ENCODE measurements at regions of chr10 and their contacts with region 1.

Region 1: GRCh38 chr10:130631142-130632096 is 495.2 kb downstream of the GLRX3 start:
- DNase-seq: peak; percentile 67
- H3K4me3 ChIP-seq: no peak overlapping the region
- H3K27ac ChIP-seq: peak overlapping the region; percentile 33
- H3K4me1 ChIP-seq: peaks cover 20% of the 10 kb centered on the region
- H3K27me3 ChIP-seq: no peaks in the 10 kb centered on the region
- CTCF ChIP-seq: no peak

Region 2: DNA sequence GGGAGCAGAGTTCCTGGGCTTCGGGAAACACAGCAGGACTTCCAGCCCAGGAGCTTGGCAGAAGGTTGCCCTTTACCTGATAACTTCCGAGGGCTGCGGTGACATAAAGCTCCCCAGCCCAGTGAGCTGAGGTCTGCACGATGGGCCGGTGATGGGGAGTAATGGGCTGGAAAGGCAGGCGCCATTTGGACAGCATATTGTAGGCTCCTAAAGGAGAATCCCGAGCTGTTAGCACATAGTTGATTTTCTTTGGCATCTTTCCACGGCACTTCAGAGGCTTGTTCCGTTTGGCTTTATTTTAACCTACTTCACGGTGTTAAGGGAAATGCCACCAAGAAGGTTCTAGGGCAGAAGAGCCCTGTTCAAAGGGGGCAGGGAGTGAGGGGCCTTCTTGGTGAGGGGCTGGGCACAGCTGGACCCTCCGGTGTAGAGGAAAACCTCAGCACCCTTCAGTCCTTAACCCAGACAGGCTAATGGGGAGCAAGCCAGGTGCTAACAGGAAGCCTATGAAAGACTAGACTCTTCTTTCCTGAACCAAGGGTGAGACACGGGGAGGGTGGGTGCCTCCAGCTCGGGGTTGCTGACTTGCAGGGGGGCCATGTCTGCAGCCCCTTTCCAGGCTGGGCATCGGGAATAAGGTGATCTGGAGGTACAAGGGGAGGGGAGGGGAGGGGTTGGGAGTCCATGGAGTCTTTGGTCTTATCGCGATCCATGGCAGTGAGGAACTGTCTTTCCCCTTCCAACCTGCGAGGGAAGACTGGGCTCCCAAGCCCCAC is 147.5 kb before region 1 on chr10:
- CTCF ChIA-PET with region 1: no interaction called
- POLR2A ChIA-PET with region 1: no interaction called
- intact Hi-C with region 1: no loop called
- DNase-seq: no peak
- H3K4me3 ChIP-seq: no peak overlapping the region
- H3K27ac ChIP-seq: no peak overlapping the region
- H3K4me1 ChIP-seq: no peaks in the 10 kb centered on the region
- H3K27me3 ChIP-seq: no peaks in the 10 kb centered on the region
- CTCF ChIP-seq: no peak

Region 3: GRCh38 chr10:130647341-130647740 is 15.9 kb after region 1 on chr10:
- CTCF ChIA-PET with region 1: no interaction called
- POLR2A ChIA-PET with region 1: interaction called, 15 read pairs
- intact Hi-C with region 1: no loop called
- DNase-seq: no peak
- H3K4me3 ChIP-seq: no peak overlapping the region
- H3K27ac ChIP-seq: no peak overlapping the region
- H3K4me1 ChIP-seq: no peaks in the 10 kb centered on the region
- H3K27me3 ChIP-seq: no peaks in the 10 kb centered on the region
- CTCF ChIP-seq: no peak

Region 4: GRCh38 chr10:130707389-130707979 is 76.1 kb after region 1 on chr10:
- CTCF ChIA-PET with region 1: no interaction called
- POLR2A ChIA-PET with region 1: no interaction called
- intact Hi-C with region 1: no loop called
- DNase-seq: peak; percentile 14
- H3K4me3 ChIP-seq: no peak overlapping the region
- H3K27ac ChIP-seq: no peak overlapping the region
- H3K4me1 ChIP-seq: no peaks in the 10 kb centered on the region
- H3K27me3 ChIP-seq: no peaks in the 10 kb centered on the region
- CTCF ChIP-seq: 0 out of 2 replicates have a peak, but pooled peaks have one; percentile 26